PC-9 (cell line): ENCODE measurements at regions of chr17 and their contacts with region 1.

Region 1: DNA sequence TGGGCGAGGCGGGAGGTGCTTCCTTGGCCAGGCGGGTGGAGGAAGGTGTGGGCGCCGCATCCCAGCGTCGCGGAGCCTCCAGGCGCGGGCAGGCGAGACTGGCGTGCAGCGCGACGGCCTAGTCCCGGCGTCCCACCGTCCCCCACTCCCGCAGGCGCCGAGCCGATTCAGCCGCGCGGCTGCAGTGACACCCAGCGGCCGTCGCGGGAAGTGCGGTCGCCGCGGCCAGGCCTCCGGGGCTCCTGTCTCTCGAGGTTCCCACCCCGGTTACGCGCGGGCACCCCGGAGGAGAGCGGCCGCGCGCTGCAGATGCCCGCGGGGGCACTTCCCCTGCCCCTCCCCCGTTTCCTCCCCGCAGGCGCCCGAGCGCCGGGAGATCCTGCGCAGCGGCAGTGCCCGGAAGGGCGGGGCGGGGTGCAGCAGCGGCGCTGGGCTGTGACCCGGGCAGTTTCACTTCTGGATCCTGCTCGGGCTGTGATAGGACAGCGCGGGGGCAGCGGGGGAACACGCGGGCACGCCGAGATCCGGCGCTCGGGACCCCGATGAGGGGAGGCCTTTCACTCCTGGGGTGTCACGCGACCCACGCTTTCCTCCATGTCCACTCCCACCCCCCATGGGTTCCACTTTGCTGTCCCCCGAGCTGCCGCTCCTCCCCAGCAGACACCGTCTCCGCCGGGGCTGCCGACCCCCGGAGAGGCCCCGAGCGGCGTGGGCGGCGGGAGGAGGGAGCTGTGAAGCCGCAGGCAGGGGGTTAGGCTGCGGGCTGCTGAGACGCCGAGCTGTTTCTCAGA is 16.6 kb downstream of the GRB7 start:
- DNase-seq: peak; percentile 74 to 98
- H3K4me3 ChIP-seq: peak overlapping the region; percentile 78
- H3K27ac ChIP-seq: peak overlapping the region; percentile 63
- H3K4me1 ChIP-seq: peaks cover 47% of the 10 kb centered on the region
- H3K27me3 ChIP-seq: no peaks in the 10 kb centered on the region
- CTCF ChIP-seq: peak; percentile 87

Region 2: DNA sequence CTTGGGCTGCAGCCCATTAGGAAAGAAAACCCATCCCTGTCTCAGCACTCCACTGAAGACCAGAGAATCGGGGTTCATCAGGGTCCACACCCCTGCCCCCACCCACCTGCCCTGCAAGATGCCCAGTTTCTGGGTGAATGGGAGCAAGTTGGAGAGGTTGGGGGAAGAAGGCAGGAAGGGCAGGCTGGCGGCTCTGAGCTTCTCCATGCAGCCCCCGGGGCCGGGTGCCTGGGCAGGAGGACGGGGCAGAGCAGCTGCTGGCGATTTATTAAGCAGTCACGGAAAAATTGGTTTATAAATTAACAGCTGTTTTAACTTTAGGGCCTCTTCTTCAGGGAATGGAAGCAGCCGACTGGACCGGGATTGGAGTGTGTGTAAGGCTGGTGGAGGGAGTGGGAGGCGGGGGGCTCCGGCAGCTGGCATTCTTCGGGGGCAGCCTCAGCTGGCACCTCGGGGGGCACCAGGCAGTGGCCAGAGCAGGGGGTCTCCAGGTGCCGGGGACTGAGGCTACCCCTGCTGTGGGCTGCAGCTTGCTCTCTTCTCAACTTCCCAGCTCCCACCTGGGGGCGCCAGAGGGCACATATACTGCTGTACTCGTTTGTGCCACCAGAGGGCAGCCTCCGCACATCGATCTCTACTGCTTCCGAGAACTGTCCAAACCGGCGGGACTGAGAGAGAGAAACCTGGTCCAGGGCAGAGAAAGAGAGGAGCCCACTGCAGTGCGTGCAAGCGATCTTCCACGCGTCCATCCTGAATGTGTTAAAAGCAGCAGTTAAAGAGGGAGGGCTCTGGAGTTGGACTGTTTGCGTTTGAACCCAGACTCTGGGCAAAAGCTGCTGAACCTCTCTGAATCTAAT is 132.6 kb before region 1 on chr17:
- CTCF ChIA-PET with region 1: interaction called, 9 read pairs
- POLR2A ChIA-PET with region 1: no interaction called
- intact Hi-C with region 1: loop called (anchors 1 kb)
- DNase-seq: peak; percentile 60 to 89
- H3K4me3 ChIP-seq: no peak overlapping the region
- H3K27ac ChIP-seq: no peak overlapping the region
- H3K4me1 ChIP-seq: 0 out of 2 replicates have a peak, but pooled peaks cover 8% of the 10 kb centered on the region
- H3K27me3 ChIP-seq: peaks cover 5% of the 10 kb centered on the region; the same call in 1 of the 2 replicates
- CTCF ChIP-seq: peak; percentile 100

Region 3: GRCh38 chr17:39704821-39705551 is 49.4 kb before region 1 on chr17:
- CTCF ChIA-PET with region 1: no interaction called
- POLR2A ChIA-PET with region 1: no interaction called
- intact Hi-C with region 1: loop called (anchors 5 kb)
- DNase-seq: no peak
- H3K4me3 ChIP-seq: no peak overlapping the region; the same call in 1 of the 2 replicates
- H3K27ac ChIP-seq: peak overlapping the region; percentile 68
- H3K4me1 ChIP-seq: peaks cover 72% of the 10 kb centered on the region
- H3K27me3 ChIP-seq: no peaks in the 10 kb centered on the region
- CTCF ChIP-seq: no peak

Region 4: GRCh38 chr17:39738931-39739884 is 15.1 kb before region 1 on chr17:
- CTCF ChIA-PET with region 1: interaction called, 5 read pairs
- POLR2A ChIA-PET with region 1: interaction called, 3 read pairs
- intact Hi-C with region 1: loop called (anchors 1 kb)
- DNase-seq: peak; percentile 84 to 89
- H3K4me3 ChIP-seq: peak overlapping the region; percentile 83
- H3K27ac ChIP-seq: peak overlapping the region; percentile 93
- H3K4me1 ChIP-seq: peaks cover 41% of the 10 kb centered on the region
- H3K27me3 ChIP-seq: no peaks in the 10 kb centered on the region
- CTCF ChIP-seq: no peak

Region 5: DNA sequence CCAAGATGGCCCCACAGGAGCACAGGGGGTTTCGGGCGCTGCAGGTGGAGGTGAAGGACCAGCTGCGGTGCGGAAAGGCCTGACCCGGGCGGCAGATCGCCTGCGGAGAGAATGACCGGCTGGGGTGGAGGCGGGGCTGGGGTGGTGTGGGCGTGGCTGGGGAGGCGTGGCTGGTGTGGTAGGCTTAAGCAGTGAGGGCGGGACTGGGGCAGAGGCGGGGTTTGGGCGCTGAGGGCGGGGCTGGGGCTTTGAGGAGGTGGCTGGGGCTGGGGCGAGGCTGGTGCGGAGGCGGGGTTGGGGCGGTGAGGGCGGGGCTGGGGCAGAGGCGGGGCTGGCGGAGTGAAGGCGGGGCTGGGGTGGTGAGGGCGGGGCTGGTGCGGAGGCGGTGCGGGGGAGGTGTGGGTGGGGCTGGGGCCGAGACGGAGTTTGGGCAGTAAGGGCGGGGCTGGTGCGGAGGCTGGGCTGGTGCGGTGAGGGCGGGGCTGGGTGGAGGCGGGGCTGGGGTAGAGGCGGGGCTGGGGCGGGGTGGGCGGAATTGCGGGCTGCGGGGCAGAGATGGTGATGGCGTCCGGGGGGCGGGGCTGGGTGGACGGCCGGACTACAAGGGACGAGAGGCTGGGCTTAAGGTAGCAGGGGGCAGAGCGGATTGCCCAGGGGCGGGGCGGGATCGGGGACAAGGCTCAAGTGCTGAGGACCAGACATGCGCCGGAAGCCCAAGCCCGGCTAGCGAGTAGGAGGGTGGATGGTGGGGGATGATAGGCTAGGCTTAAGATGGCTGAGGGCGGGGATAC is 198.5 kb after region 1 on chr17:
- CTCF ChIA-PET with region 1: no interaction called
- POLR2A ChIA-PET with region 1: no interaction called
- intact Hi-C with region 1: loop called (anchors 10 kb)
- DNase-seq: peak; percentile 80 to 88
- H3K4me3 ChIP-seq: peak overlapping the region; percentile 41; the same call in 1 of the 2 replicates
- H3K27ac ChIP-seq: no peak overlapping the region
- H3K4me1 ChIP-seq: peaks cover 20% of the 10 kb centered on the region
- H3K27me3 ChIP-seq: no peaks in the 10 kb centered on the region
- CTCF ChIP-seq: no peak